CD4-positive, alpha-beta memory T cell (primary cell): ENCODE measurements at regions of chr10 and their contacts with region 1.

Region 1: GRCh38 chr10:45594276-45595106 is 78.1 kb downstream of the ZFAND4 start:
- DNase-seq: peak; percentile 88 to 91 (median 89)
- H3K4me3 ChIP-seq: peak overlapping the region; percentile 62 to 84
- H3K4me3 Mint-ChIP-seq: peak overlapping the region; percentile 90 to 97 (median 96)
- H3K27ac ChIP-seq: peak overlapping the region; percentile 66
- H3K27ac Mint-ChIP-seq: peak overlapping the region; percentile 87 to 98 (median 96)
- H3K4me1 ChIP-seq: peaks cover 33% of the 10 kb centered on the region
- H3K4me1 Mint-ChIP-seq: peaks cover 25 to 58% (median 36%) of the 10 kb centered on the region in 4 donors
- H3K27me3 ChIP-seq: no peaks in the 10 kb centered on the region
- H3K27me3 Mint-ChIP-seq: peaks cover 4 to 5% of the 10 kb centered on the region in 2 donors

Region 2: DNA sequence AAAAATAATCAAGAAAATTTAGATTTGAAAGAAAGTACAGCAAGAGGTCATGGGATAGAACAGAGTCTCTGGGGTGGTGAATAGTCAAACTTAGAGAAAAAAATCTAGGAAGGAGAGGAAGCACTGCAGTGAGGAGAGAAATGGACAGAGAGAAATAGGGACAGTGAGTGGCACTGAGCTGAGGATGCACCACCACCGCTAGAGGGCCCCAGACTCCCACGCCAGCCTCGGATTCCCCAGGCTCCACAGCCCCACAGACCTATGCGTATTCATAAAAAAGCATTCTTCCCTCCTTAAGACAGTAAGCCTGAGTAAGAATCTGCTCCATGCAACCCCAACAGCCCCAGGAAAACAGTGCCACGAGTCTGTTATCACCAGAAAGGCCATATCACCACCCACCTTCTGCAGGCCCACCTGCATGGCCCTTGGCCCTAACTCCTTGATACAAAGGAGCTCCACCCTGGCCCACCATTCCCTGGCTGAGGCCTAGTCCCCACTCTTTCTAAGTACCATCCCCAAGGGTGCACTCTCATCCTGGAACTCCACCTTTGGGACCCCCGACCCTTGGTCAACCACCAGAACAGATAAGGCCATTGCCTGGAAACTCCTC is 129.4 kb before region 1 on chr10:
- CTCF ChIA-PET with region 1: interaction called, 6 read pairs
- POLR2A ChIA-PET with region 1: interaction called, 5 read pairs
- intact Hi-C with region 1: loop called (anchors 2 kb)
- DNase-seq: peak; percentile 67 to 73 (median 70)
- H3K4me3 ChIP-seq: no peak overlapping the region
- H3K4me3 Mint-ChIP-seq: no peak overlapping the region
- H3K27ac ChIP-seq: no peak overlapping the region
- H3K27ac Mint-ChIP-seq: peak overlapping the region in 6 of 7 donors; percentile 5 to 83 (median 45)
- H3K4me1 ChIP-seq: peaks cover 8% of the 10 kb centered on the region
- H3K4me1 Mint-ChIP-seq: peaks cover 14 to 39% (median 21%) of the 10 kb centered on the region in 4 donors
- H3K27me3 ChIP-seq: no peaks in the 10 kb centered on the region
- H3K27me3 Mint-ChIP-seq: no peaks in the 10 kb centered on the region

Region 3: GRCh38 chr10:45580371-45581215 is 13.9 kb before region 1 on chr10:
- CTCF ChIA-PET with region 1: interaction called, 4 read pairs
- POLR2A ChIA-PET with region 1: interaction called, 27 read pairs
- intact Hi-C with region 1: loop called (anchors 1 kb)
- DNase-seq: peak; percentile 33 to 45 (median 35)
- H3K4me3 ChIP-seq: peak overlapping the region; percentile 44 to 61
- H3K4me3 Mint-ChIP-seq: peak overlapping the region; percentile 86 to 99 (median 94)
- H3K27ac ChIP-seq: peak overlapping the region; percentile 77
- H3K27ac Mint-ChIP-seq: peak overlapping the region; percentile 88 to 99 (median 97)
- H3K4me1 ChIP-seq: peaks cover 21% of the 10 kb centered on the region
- H3K4me1 Mint-ChIP-seq: peaks cover 38 to 44% (median 39%) of the 10 kb centered on the region in 4 donors
- H3K27me3 ChIP-seq: no peaks in the 10 kb centered on the region
- H3K27me3 Mint-ChIP-seq: no peaks in the 10 kb centered on the region

Region 4: DNA sequence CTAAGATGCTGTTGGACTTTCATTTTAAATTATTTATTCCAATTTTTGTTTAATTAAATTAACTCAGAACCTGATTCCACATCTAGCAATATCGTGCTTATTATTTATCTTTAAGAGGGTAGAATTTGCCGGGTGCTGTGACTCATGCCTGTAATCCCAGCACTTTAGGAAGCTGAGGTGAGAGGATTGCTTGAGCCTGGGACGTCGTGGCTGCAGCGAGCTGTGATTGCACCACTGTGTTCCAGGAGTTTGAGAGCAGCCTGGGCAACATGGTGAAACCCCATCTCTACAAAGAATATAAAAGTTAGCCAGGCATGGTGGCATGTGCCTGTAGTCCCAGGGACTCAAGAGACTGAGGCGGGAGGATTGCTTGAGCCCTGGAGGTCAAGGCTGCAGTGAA is 30.2 kb after region 1 on chr10:
- CTCF ChIA-PET with region 1: no interaction called
- POLR2A ChIA-PET with region 1: no interaction called
- intact Hi-C with region 1: no loop called
- DNase-seq: no peak
- H3K4me3 ChIP-seq: no peak overlapping the region
- H3K4me3 Mint-ChIP-seq: no peak overlapping the region
- H3K27ac ChIP-seq: no peak overlapping the region
- H3K27ac Mint-ChIP-seq: no peak overlapping the region
- H3K4me1 ChIP-seq: no peaks in the 10 kb centered on the region
- H3K4me1 Mint-ChIP-seq: peaks cover 0 to 4% (median under 1%) of the 10 kb centered on the region in 4 donors
- H3K27me3 ChIP-seq: no peaks in the 10 kb centered on the region
- H3K27me3 Mint-ChIP-seq: no peaks in the 10 kb centered on the region